H1 (cell line): ENCODE measurements at regions of chr2 and their contacts with region 1.

Region 1: GRCh38 chr2:64488050-64488974 is 34.4 kb downstream of the LGALSL start:
- DNase-seq: peak; percentile 58 to 97
- H3K4me3 ChIP-seq: no peak overlapping the region
- H3K27ac ChIP-seq: no peak overlapping the region
- H3K4me1 ChIP-seq: peaks cover 5 to 12% (median 10%) of the 10 kb centered on the region in 4 experiments
- H3K27me3 ChIP-seq: peaks cover 0 to 3% (median 0%) of the 10 kb centered on the region in 4 experiments; a peak in 1 of 7 replicates
- CTCF ChIP-seq: peak; percentile 86
- EP300 ChIP-seq: no peak
- POLR2A ChIP-seq: no peak
- RAD21 ChIP-seq: peak; percentile 81 to 87

Region 2: DNA sequence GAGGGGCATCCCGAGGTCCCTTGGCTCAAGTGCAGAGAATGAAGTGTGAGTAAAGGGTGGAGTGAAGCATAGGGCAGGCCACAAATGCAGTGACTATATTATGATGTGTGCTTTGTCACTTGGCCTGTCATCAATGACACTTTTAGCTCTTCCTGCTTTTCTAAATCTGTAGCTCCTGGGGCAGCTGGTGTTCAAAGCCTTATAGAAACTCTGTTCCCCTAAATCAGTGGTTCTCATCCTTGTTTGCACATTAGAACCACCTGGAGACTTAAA is 169.9 kb before region 1 on chr2:
- CTCF ChIA-PET with region 1: interaction called, 10 read pairs
- POLR2A ChIA-PET with region 1: no interaction called
- DNase-seq: no peak
- H3K4me3 ChIP-seq: no peak overlapping the region
- H3K27ac ChIP-seq: no peak overlapping the region
- H3K4me1 ChIP-seq: peaks cover 0 to 4% (median 0%) of the 10 kb centered on the region in 4 experiments; a peak in 3 of 7 replicates
- H3K27me3 ChIP-seq: peaks cover 0 to 3% (median 0%) of the 10 kb centered on the region in 4 experiments; a peak in 1 of 7 replicates
- CTCF ChIP-seq: no peak
- EP300 ChIP-seq: no peak
- POLR2A ChIP-seq: no peak
- RAD21 ChIP-seq: no peak

Region 3: GRCh38 chr2:64453770-64454385 is 34.4 kb before region 1 on chr2 and contains the start of gene LGALSL:
- CTCF ChIA-PET with region 1: interaction called, 20 read pairs
- POLR2A ChIA-PET with region 1: interaction called, 6 read pairs
- DNase-seq: peak in 1 of 2 experiments; percentile 86
- H3K4me3 ChIP-seq: peak within 1 kb of the TSS; percentile 68 to 89 (median 78)
- H3K27ac ChIP-seq: peak within 1 kb of the TSS; percentile 88; the same call in 1 of the 2 replicates
- H3K4me1 ChIP-seq: peaks cover 2 to 12% (median 5%) of the 10 kb centered on the region in 4 experiments; a peak in 4 of 7 replicates
- H3K27me3 ChIP-seq: no peaks in the 10 kb centered on the region
- CTCF ChIP-seq: no peak
- EP300 ChIP-seq: no peak
- POLR2A ChIP-seq: no peak; a peak in 2 of 3 replicates
- RAD21 ChIP-seq: no peak
- total RNA-seq, gene LGALSL: 29.2 and 32.3 TPM in 2 replicates

Region 4: DNA sequence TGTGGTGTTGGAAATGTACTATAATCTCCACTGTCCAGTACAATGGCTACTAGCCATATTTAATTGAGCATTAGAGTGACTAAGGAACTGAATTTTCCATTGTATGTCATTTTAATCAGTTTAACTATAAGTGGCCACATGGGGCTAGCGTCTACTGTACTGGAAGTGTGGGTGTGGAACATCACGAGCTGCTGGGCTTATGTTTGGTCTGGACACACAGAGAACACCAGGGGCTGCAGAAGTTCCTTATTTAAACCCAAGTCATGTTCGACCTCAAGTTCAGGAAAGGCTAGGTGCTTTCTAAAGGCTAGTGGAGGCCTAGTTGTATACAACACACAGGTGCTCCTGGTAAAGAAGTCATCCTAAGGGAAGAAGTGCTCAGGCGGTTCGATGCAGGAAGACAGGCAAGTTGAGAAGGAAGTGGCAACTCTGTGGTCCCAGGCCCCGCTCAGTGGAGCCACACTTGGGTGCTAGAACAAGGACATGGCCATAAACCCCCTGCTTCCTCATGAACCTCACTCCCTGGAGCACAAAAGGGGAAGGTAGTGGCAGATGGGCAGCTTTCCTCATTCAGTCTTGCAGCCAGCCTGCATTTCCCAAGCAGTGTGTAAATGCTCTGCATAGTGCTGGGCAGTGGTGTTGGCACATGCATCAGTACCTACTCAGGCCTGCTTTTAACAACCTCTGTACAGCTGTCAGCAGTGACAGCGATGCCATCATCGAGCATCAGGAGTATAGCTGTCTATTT is 21.0 kb before region 1 on chr2:
- CTCF ChIA-PET with region 1: interaction called, 56 read pairs
- POLR2A ChIA-PET with region 1: interaction called, 3 read pairs
- DNase-seq: no peak
- H3K4me3 ChIP-seq: no peak overlapping the region
- H3K27ac ChIP-seq: no peak overlapping the region
- H3K4me1 ChIP-seq: peaks cover 0 to 5% (median 1%) of the 10 kb centered on the region in 4 experiments; a peak in 2 of 7 replicates
- H3K27me3 ChIP-seq: no peaks in the 10 kb centered on the region
- CTCF ChIP-seq: no peak
- EP300 ChIP-seq: no peak
- POLR2A ChIP-seq: no peak
- RAD21 ChIP-seq: no peak

Region 5: DNA sequence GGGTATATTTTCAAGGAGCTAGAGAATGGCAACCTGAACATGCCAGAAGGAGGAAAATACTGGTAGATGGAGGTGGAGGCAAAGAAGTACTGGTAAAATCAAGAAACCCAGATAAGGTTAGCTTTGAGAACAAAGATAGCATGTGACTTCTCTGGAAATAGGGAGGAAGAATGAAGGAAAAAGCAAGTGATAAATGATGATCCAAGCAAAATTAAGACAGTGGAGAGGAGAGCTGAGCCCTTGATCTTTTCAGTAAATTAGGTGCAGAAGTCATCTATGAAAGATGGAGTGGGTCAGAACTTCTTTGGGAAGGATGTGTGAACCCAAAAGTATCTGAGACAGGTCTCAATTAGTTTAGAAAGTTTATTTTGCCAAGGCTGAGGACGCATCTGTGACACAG is 10.1 kb after region 1 on chr2:
- CTCF ChIA-PET with region 1: interaction called, 39 read pairs
- POLR2A ChIA-PET with region 1: no interaction called
- DNase-seq: no peak
- H3K4me3 ChIP-seq: no peak overlapping the region
- H3K27ac ChIP-seq: no peak overlapping the region
- H3K4me1 ChIP-seq: peaks cover 0 to 10% (median 0%) of the 10 kb centered on the region in 4 experiments; a peak in 2 of 7 replicates
- H3K27me3 ChIP-seq: no peaks in the 10 kb centered on the region
- CTCF ChIP-seq: no peak
- EP300 ChIP-seq: no peak
- POLR2A ChIP-seq: no peak
- RAD21 ChIP-seq: no peak

Region 6: GRCh38 chr2:64514008-64514407 is 25.7 kb after region 1 on chr2:
- CTCF ChIA-PET with region 1: interaction called, 11 read pairs
- POLR2A ChIA-PET with region 1: no interaction called
- DNase-seq: no peak
- H3K4me3 ChIP-seq: no peak overlapping the region
- H3K27ac ChIP-seq: no peak overlapping the region
- H3K4me1 ChIP-seq: no peaks in the 10 kb centered on the region
- H3K27me3 ChIP-seq: no peaks in the 10 kb centered on the region
- CTCF ChIP-seq: no peak
- EP300 ChIP-seq: no peak
- POLR2A ChIP-seq: no peak
- RAD21 ChIP-seq: no peak

Region 7: DNA sequence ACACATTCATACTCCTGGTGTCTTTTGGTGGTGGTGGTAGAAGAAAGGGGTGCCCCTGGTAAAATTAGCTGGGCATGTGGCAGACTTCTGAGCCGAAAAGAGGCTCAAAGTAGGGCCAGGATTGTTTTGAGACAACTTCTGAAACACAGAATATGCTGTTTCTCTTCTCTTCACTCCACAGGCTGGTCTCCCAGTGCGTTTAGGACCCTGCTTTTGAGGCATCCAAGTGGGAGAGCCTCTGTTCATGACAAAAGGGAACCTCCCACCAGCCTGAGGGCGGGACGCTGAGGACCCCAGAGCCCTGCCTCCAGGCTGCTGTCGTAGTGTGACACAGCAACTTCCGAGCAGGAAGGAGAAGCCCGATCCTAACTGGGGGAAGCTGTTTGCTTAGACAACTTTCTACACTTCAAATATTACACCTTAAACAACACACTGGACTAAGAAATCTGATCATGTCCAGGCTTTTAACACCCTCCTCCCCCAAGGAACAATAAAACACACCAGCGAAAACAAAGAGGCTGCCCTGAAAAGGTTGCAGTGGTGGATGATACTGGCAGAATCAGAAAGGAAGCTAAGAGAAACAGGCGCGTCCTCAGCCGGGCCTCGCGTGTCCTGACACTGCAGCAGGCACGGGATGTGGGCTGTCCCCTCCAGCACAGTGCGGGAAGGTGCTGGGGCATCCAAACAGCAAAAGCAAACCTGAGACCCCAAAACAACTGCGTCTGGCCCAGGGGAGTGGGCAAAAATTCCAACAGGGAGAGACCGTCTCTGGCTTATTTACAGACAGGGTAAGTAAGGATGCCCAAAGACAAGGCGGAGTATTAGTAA is 156.1 kb after region 1 on chr2:
- CTCF ChIA-PET with region 1: no interaction called
- POLR2A ChIA-PET with region 1: no interaction called
- DNase-seq: peak; percentile 71 to 75
- H3K4me3 ChIP-seq: peak overlapping the region; percentile 48 to 64 (median 58)
- H3K27ac ChIP-seq: peak overlapping the region; percentile 49
- H3K4me1 ChIP-seq: peaks cover 6 to 22% (median 14%) of the 10 kb centered on the region in 4 experiments
- H3K27me3 ChIP-seq: peaks cover 4 to 19% (median 11%) of the 10 kb centered on the region in 4 experiments; a peak in 6 of 7 replicates
- CTCF ChIP-seq: no peak
- EP300 ChIP-seq: no peak; a peak in 1 of 3 replicates
- POLR2A ChIP-seq: peak; percentile 51 to 57; a peak in 2 of 3 replicates
- RAD21 ChIP-seq: no peak